Activated T-helper 2 cell treated with anti-CD3 and anti-CD28 coated beads, Interferon-gamma antibody, Interleukin-2, Interleukin-4, amounts not matched to agents 10 μg/mL and 5 μg/mL and 100 μg/mL, durations not matched to agents 14 hours and 24 hours and 36 hours (primary cell): ENCODE measurements at regions of chr3 and their contacts with region 1.

Region 1: GRCh38 chr3:58491506-58492402 is at the start of gene KCTD6:
- DNase-seq: peak; percentile 87
- H3K4me3 Mint-ChIP-seq: peak within 1 kb of the TSS; percentile 96
- H3K27ac Mint-ChIP-seq: peak within 1 kb of the TSS; percentile 84
- H3K4me1 Mint-ChIP-seq: peaks cover 37% of the 10 kb centered on the region
- H3K27me3 Mint-ChIP-seq: peaks cover 35% of the 10 kb centered on the region
- total RNA-seq, gene KCTD6: 7.2 and 8.7 TPM in 2 replicates

Region 2: DNA sequence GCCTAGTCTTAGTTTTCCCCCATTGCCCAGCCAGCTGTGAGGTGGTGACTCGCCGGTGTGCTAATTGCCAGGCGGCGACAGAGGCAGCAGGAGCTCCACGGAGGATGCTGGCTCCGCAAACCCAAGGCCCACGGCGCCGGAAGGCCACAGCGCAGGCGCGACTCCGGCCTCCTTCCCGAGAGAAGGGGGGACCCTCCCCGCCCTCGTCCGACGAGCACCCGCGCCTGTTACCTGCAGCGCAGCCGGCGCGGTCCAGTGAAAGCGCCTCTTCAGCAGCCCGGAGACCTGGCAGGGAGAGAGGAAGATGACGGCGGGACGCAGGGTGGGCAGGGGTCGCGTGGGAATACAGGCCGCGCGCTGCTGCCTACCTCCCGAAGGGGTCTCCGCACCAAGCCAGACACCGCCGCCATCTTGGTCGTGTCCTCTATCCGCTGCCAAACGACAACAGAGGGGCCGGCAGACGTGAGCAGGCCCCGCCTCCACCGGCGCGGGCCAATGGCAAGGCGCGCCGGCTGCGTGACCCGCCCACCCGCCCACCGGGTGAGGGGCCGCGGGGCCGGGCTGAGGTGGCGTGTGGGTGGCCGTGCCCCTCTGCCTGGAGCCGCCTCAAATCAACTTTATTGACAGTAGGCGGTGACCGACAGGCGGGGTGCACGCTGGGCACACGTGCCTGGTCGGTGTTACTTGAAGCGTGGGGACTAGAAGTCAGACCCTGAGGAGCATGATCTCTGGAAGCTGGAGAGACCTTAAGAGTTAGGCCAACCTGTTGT is 58.2 kb before region 1 on chr3 and contains the start of gene PDHB:
- intact Hi-C with region 1: loop called (anchors 1 kb)
- DNase-seq: peak; percentile 87
- H3K4me3 Mint-ChIP-seq: peak within 1 kb of the TSS; percentile 90
- H3K27ac Mint-ChIP-seq: peak within 1 kb of the TSS; percentile 90
- H3K4me1 Mint-ChIP-seq: peaks cover 36% of the 10 kb centered on the region
- H3K27me3 Mint-ChIP-seq: peaks cover 5% of the 10 kb centered on the region
- total RNA-seq, gene PDHB: 79.3 and 82.7 TPM in 2 replicates

Region 3: GRCh38 chr3:58463181-58463941 is 28.4 kb before region 1 on chr3:
- intact Hi-C with region 1: loop called (anchors 1 kb)
- DNase-seq: peak; percentile 61
- H3K4me3 Mint-ChIP-seq: no peak overlapping the region
- H3K27ac Mint-ChIP-seq: no peak overlapping the region
- H3K4me1 Mint-ChIP-seq: peaks cover 19% of the 10 kb centered on the region
- H3K27me3 Mint-ChIP-seq: peaks cover 4% of the 10 kb centered on the region

Region 4: GRCh38 chr3:58471025-58471887 is 20.5 kb before region 1 on chr3:
- intact Hi-C with region 1: loop called (anchors 1 kb)
- DNase-seq: peak; percentile 62
- H3K4me3 Mint-ChIP-seq: no peak overlapping the region
- H3K27ac Mint-ChIP-seq: peak overlapping the region; percentile 76
- H3K4me1 Mint-ChIP-seq: peaks cover 48% of the 10 kb centered on the region
- H3K27me3 Mint-ChIP-seq: no peaks in the 10 kb centered on the region

Region 5: GRCh38 chr3:59580996-59581395 is 1089.2 kb after region 1 on chr3:
- intact Hi-C with region 1: no loop called
- DNase-seq: no peak
- H3K4me3 Mint-ChIP-seq: no peak overlapping the region
- H3K27ac Mint-ChIP-seq: no peak overlapping the region
- H3K4me1 Mint-ChIP-seq: peaks cover 15% of the 10 kb centered on the region
- H3K27me3 Mint-ChIP-seq: no peaks in the 10 kb centered on the region